ENCODE measurements at regions of chr16 and their contacts with region 1.

Region 1: GRCh38 chr16:78984324-78984723 is 616.2 kb downstream of the MAF start:
- DNase-seq: no peak
- H3K27ac ChIP-seq: no peak overlapping the region
- CTCF ChIP-seq: no peak

Region 2: DNA sequence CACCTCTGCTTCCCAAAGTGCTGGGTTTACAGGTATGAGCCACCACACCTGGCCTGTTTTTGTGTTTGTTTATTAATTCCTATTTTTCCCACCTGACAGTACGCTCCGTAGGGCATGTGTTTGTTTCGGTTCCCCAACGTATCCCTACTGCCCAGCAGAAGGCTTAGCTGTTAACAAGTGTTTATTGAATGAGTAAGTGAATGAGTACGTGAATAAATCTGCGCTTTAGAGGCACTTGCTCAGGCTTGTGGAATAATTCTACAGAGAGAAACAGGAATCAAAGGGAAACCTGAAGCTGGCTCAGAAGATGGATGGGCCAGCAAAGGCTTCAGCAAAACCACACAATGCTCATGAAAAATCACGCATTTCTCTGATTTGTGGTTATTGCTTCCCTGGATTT is 31.7 kb before region 1 on chr16:
- CTCF ChIA-PET with region 1: no interaction called
- POLR2A ChIA-PET with region 1: no interaction called
- DNase-seq: no peak
- H3K27ac ChIP-seq: no peak overlapping the region
- CTCF ChIP-seq: no peak

Region 3: DNA sequence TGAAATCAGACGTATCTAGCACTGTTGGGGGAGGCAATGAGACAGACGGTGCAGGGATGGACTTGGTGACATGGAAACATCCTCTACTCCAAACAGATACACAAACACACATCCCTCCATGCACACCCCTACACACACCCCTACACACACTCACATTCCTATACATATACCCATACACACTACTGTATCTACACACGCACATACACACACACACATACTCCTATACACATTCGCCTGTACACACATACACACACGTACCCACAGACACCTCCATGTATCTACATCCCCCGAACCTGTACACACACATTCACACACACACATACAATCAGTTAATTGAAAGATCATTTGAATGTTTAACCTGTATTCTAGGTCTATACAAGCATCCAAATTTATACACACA is 562.8 kb after region 1 on chr16:
- CTCF ChIA-PET with region 1: no interaction called
- POLR2A ChIA-PET with region 1: interaction called, 13 read pairs
- DNase-seq: no peak
- H3K27ac ChIP-seq: no peak overlapping the region
- CTCF ChIP-seq: no peak

Measured in RWPE1 (cell line).